MCF 10A (cell line): ENCODE measurements at regions of chr15 and their contacts with region 1.

Region 1: GRCh38 chr15:75684642-75685041 is 28.0 kb downstream of the CSPG4 start:
- DNase-seq: no peak
- H3K4me3 Mint-ChIP-seq: no peak overlapping the region
- H3K27ac Mint-ChIP-seq: no peak overlapping the region
- H3K4me1 Mint-ChIP-seq: no peaks in the 10 kb centered on the region
- H3K27me3 Mint-ChIP-seq: no peaks in the 10 kb centered on the region
- CTCF ChIP-seq: no peak

Region 2: DNA sequence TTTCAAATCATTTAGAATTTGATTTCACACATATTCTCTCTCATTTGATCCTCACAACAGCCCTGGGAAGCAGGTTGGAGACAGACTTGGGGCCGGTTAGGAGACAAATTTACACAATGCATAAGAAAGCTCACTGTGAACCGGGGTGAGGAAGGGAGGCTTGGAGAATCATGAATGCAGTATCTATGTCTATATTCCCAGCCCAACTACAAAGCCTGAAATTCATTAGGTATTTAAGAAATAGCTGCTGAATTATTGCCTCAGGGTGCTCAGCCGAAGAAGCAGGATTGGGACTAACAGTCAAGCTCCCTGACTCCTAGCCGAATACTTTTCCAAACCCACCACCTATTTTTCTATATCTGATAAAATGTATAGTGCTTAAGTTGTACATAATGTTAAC is 434.9 kb before region 1 on chr15:
- CTCF ChIA-PET with region 1: no interaction called
- POLR2A ChIA-PET with region 1: no interaction called
- intact Hi-C with region 1: no loop called
- DNase-seq: no peak
- H3K4me3 Mint-ChIP-seq: no peak overlapping the region
- H3K27ac Mint-ChIP-seq: no peak overlapping the region
- H3K4me1 Mint-ChIP-seq: no peaks in the 10 kb centered on the region
- H3K27me3 Mint-ChIP-seq: peaks cover 79% of the 10 kb centered on the region
- CTCF ChIP-seq: no peak

Region 3: DNA sequence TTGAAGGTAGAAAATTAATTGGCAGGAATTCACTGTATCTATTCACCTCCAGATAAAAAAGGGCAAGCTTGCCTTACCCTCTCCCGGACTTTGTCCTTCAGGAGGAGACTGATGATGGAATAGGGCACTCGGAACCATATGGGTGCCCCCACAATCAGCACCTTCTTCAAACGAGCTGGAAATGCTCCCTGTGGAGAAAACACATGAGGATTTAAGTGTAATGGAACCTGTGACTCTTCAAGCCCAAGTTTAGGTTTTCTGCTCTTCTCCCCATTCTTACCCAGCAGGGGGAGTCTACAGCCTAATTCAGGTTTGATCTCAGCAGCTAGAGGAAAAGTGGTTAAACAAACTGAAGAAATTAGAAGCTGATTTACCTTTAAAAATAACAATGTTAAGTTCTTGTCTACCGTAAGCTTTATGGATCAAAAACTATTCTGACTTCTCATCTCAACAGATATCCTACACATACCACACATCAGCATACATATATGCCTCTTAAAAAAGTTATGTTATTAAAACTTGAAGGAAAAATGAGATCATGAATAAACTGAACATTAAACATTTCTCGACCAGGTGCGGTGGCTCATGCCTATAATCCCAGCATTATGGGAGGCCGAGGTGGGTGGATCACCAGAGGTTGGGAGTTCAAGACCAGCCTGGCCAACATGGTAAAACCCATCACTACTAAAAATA is 175.7 kb before region 1 on chr15:
- CTCF ChIA-PET with region 1: interaction called, 5 read pairs
- POLR2A ChIA-PET with region 1: interaction called, 3 read pairs
- intact Hi-C with region 1: loop called (anchors 2 kb)
- DNase-seq: peak; percentile 53
- H3K4me3 Mint-ChIP-seq: no peak overlapping the region
- H3K27ac Mint-ChIP-seq: no peak overlapping the region
- H3K4me1 Mint-ChIP-seq: no peaks in the 10 kb centered on the region
- H3K27me3 Mint-ChIP-seq: no peaks in the 10 kb centered on the region
- CTCF ChIP-seq: peak; percentile 51

Region 4: DNA sequence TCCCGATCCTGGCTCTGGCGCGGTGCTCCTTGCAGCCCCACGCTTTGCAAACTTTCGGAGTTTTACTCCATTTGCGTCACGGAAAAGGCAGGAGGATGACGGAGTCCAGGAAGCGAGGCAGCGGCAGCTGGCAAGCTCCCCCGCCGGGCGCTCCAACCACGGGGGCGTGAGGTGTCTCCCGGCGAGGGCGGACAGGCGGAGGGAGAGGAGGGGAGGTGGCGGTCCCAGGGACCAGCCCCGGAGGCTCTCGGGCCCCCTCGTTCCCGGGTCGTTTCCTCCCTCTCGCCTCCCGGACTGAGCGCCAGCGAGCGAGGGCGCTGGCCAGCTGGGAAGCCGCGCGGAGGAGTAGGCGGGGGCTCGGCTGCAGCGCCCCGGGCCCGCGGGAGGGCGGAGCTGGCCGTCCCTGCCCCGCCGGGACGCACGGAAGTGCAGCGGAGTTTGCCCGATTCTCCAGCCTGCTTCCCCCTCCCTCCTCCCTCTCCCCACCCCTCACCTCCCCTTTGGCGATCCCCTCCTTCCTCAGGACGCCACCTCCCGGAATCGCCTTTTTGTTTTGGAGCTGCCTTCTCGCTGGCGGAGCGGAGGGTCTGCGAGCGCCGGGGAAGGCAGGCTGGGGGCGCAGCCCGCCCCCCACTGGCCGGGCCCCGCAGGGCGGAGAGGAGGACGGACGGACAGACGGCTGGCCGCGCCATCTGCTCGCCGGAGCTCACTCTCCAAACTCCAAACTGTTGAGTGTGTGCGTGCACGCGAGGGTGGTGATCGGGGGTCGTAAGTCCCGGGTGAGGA is 37.1 kb before region 1 on chr15 and contains the start of gene SNX33:
- CTCF ChIA-PET with region 1: interaction called, 9 read pairs
- POLR2A ChIA-PET with region 1: no interaction called
- intact Hi-C with region 1: loop called (anchors 2 kb)
- DNase-seq: peak; percentile 77
- H3K4me3 Mint-ChIP-seq: peak within 1 kb of the TSS; percentile 87
- H3K27ac Mint-ChIP-seq: peak within 1 kb of the TSS; percentile 78
- H3K4me1 Mint-ChIP-seq: peaks cover 47% of the 10 kb centered on the region
- H3K27me3 Mint-ChIP-seq: no peaks in the 10 kb centered on the region
- CTCF ChIP-seq: peak; percentile 48
- total RNA-seq, gene SNX33: 14.3 and 15.2 TPM in 2 replicates

Region 5: DNA sequence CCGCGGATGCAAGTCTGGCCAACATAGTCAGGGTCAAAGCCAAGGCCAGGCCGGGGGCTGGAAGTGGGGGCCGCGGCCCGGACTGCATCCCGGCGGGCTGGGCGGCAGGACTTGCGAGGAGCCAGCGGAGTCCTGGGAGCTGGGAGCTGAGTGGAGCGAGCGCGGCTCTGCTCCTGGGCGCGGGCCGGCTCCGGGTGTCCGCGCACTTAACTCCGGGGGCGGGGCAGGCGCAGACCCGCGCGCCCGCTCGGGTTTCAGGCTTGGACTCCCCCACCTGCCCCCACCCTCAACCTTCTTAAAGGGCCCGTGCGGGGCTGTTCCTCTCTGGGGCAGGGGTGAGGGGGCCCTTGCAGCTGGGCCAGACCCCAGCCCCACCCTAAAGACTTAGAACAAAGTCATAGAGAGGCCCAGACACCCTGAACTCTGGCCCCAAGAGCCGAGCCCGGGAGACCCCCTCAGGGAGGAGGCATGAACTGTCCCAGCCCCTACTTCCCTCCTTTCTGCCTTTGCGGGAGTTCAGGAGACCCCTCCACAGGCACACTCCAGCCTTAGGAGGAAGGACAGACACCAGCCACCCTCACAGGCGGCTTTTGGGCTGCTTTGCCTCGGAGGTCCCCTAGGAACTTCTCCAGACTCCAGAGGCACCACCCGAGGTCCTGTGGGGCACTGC is 28.2 kb after region 1 on chr15 and contains the start of gene CSPG4:
- CTCF ChIA-PET with region 1: interaction called, 11 read pairs
- POLR2A ChIA-PET with region 1: no interaction called
- intact Hi-C with region 1: no loop called
- DNase-seq: no peak
- H3K4me3 Mint-ChIP-seq: no peak within 1 kb of the TSS
- H3K27ac Mint-ChIP-seq: no peak within 1 kb of the TSS
- H3K4me1 Mint-ChIP-seq: peaks cover 6% of the 10 kb centered on the region
- H3K27me3 Mint-ChIP-seq: no peaks in the 10 kb centered on the region
- CTCF ChIP-seq: no peak
- total RNA-seq, gene CSPG4: 0.05 and 0.21 TPM in 2 replicates

Region 6: DNA sequence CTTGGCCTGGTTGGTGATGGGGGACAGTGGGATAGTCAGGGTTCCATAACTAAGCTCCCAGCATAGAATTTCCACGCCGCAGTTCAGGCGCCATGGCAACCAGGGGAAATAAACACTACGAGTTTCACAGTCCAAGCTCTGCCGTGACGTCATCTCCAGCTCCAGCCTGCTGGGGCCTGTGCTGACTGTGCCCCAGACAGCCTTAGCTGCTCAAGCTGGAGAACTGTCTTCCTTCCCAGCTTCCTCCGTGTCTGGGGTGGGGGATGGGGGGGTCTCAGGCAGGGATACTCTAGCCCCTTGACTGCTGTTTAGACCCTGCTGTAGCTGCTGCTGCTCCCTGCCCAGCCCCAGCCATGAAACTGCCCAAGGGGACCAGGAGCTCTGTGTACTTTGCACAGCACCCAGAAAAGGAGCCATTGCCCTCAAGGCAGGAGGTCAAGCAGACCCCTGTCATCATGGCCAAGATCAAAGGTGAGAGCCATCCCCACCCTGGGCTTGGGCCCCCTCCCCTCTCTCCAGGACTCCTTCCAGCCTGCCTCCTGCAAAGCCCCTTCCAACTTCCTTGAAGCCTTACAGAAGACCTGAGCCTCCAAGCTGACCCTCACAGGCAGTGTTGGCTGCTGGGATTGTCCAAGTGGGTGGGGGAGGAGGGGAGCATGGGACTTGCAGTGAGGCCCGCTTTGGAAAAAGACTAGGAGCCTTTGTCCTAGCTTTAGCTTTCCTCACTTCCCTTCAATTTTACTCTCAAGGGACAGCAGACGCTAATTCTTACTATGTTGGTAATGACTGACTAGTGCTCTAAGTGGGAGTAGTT is 39.4 kb after region 1 on chr15:
- CTCF ChIA-PET with region 1: interaction called, 12 read pairs
- POLR2A ChIA-PET with region 1: interaction called, 3 read pairs
- intact Hi-C with region 1: loop called (anchors 5 kb)
- DNase-seq: peak; percentile 75
- H3K4me3 Mint-ChIP-seq: no peak overlapping the region
- H3K27ac Mint-ChIP-seq: peak overlapping the region; percentile 86
- H3K4me1 Mint-ChIP-seq: peaks cover 10% of the 10 kb centered on the region
- H3K27me3 Mint-ChIP-seq: no peaks in the 10 kb centered on the region
- CTCF ChIP-seq: no peak

Region 7: GRCh38 chr15:75801859-75802593 is 117.4 kb after region 1 on chr15:
- CTCF ChIA-PET with region 1: interaction called, 93 read pairs
- POLR2A ChIA-PET with region 1: interaction called, 4 read pairs
- intact Hi-C with region 1: loop called (anchors 1 kb)
- DNase-seq: peak; percentile 83
- H3K4me3 Mint-ChIP-seq: peak overlapping the region; percentile 38
- H3K27ac Mint-ChIP-seq: no peak overlapping the region
- H3K4me1 Mint-ChIP-seq: no peaks in the 10 kb centered on the region
- H3K27me3 Mint-ChIP-seq: peaks cover 26% of the 10 kb centered on the region
- CTCF ChIP-seq: peak; percentile 92

Region 8: DNA sequence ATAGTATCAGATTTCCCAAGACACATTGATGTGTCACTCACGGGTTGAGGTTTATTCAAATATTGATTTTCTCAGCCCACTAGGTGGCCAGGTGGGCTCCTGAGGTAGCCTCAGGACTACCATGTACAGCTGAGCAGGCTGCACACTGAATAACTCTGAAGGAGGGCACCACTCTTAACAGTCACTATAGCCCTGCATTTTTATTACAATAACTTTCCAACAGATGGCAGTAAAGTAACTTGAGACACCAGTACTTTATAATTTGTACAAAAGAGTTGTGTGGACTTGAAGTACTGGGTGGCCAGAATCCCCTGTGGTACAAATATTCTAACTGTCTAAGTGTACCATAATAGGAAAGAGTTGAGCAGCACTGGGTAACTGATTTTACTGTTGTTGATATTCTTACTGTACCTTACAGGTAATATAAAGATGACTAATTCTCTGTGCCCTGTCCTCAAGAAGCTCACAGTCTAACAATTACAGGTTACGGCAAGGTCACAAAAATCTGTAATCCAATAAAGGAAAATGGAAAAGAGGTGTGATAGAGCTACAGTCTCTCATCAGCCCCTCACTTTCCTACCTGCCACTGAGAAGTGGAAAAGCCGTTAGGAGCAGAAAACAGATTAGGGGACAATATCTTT is 550.7 kb after region 1 on chr15:
- CTCF ChIA-PET with region 1: no interaction called
- POLR2A ChIA-PET with region 1: no interaction called
- intact Hi-C with region 1: no loop called
- DNase-seq: peak; percentile 42
- H3K4me3 Mint-ChIP-seq: no peak overlapping the region
- H3K27ac Mint-ChIP-seq: no peak overlapping the region
- H3K4me1 Mint-ChIP-seq: peaks cover 6% of the 10 kb centered on the region
- H3K27me3 Mint-ChIP-seq: no peaks in the 10 kb centered on the region
- CTCF ChIP-seq: peak; percentile 34